Activated CD4-positive, alpha-beta T cell treated with anti-CD3 and anti-CD28 coated beads for 36 hours (primary cell): ENCODE measurements at regions of chr2 and their contacts with region 1.

Region 1: DNA sequence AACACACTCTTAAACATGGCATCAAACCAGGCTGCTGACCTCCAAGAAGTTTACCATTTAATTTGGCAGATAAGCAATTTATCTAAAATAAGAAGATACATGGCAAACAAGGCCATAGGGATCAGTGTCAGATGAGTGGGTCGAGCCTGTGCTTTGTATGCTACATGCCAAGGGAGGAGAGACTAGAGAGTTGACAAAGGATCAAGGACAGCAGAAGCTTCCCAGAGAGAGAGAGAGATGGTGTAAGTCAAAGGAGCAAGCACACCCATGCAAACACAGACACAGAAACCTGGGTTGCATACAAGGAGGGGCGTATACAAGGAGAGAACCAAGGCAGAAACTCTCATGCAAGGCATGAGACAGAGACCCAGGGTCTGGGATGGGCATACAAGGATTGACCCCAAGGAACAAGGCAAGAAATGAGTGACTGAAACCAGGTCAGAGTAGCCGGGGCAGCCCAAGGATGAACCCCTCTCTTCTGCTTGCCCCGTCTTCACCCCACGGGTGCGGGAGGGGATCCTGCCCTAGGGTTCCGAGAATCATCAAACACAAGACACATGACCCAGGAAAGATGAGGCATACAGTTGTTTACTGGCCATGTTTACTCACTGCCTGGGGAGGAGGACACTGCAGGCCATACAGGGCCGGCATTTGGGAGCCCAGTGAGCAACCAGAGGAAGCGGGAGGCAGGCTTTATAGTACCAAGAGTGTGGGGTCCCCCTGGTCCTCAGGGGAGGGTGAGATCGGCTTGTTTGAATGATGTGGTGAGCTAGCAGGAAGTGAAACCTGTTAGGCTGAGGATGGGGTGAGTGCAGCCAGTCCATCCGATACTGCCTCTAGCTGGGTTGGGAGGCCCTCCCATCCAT is 529.2 kb upstream of the ID2 start:
- DNase-seq: no peak
- ATAC-seq: no peak
- H3K4me3 Mint-ChIP-seq: no peak overlapping the region
- H3K27ac Mint-ChIP-seq: no peak overlapping the region
- H3K4me1 Mint-ChIP-seq: peaks cover 30% of the 10 kb centered on the region
- H3K27me3 Mint-ChIP-seq: no peaks in the 10 kb centered on the region

Region 2: DNA sequence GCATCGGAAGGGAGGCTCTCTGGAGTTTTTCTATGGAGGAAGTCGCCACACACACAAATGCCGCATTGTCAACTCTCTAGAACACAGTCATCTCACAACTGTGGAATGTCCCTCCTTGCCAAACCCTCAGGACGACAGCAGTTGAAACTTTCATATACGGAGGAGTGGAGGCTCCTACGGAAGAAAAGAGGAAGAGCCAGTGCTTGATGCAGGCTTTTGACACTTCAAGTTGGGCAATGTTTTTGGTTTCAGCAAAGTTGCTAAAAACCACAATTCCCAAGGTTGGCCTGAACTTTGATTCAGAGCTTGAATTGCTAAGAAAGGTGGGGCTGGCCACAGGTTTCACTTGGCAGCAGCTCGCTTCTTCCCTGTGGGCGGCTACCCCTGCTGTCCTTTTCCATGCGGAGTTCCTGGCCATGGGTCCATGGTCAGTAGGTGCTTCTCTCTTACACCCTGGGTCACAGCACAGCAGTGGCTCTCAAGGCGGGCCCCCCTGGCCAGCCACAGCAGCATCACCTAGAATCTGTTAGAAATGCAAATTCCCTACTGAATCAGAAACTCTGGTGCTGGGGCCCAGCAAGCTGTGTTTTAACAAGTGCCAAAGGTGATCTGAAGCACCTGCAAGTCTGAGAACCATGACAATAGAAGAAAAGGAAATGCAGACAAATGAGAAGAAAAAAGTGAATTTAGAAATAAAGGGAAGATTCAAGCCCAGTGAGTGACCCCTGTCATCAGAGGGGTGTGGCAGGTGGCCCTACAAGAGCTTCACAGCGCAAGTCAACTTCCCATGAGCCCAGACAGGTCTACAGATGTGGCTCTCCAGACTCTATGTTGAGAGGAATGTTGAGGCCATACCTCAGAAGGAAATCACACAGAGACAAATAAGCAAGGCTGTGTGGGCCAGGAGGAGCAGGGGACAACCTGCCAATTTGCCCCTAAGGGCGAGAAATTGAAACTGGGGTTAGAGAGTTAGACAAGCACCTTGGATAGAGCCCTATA is 379.0 kb before region 1 on chr2:
- CTCF ChIA-PET with region 1: no interaction called
- POLR2A ChIA-PET with region 1: no interaction called
- intact Hi-C with region 1: loop called in 1 of 2 experiments (anchors 10 kb)
- DNase-seq: peak; percentile 66
- ATAC-seq: peak; percentile 76
- H3K4me3 Mint-ChIP-seq: peak overlapping the region; percentile 11
- H3K27ac Mint-ChIP-seq: peak overlapping the region; percentile 64
- H3K4me1 Mint-ChIP-seq: peaks cover 28% of the 10 kb centered on the region
- H3K27me3 Mint-ChIP-seq: peaks cover 3% of the 10 kb centered on the region

Region 3: GRCh38 chr2:7930800-7931635 is 221.6 kb before region 1 on chr2:
- CTCF ChIA-PET with region 1: no interaction called
- POLR2A ChIA-PET with region 1: no interaction called
- intact Hi-C with region 1: loop called (anchors 2 to 5 kb)
- DNase-seq: peak; percentile 56
- ATAC-seq: peak; percentile 80
- H3K4me3 Mint-ChIP-seq: peak overlapping the region; percentile 0
- H3K27ac Mint-ChIP-seq: peak overlapping the region; percentile 93
- H3K4me1 Mint-ChIP-seq: peaks cover 33% of the 10 kb centered on the region
- H3K27me3 Mint-ChIP-seq: no peaks in the 10 kb centered on the region

Region 4: GRCh38 chr2:8119782-8120505 is 32.7 kb before region 1 on chr2:
- CTCF ChIA-PET with region 1: no interaction called
- POLR2A ChIA-PET with region 1: no interaction called
- intact Hi-C with region 1: loop called in 1 of 2 experiments (anchors 1 kb)
- DNase-seq: peak; percentile 26
- ATAC-seq: peak; percentile 82
- H3K4me3 Mint-ChIP-seq: peak overlapping the region; percentile 26
- H3K27ac Mint-ChIP-seq: peak overlapping the region; percentile 59
- H3K4me1 Mint-ChIP-seq: peaks cover 20% of the 10 kb centered on the region
- H3K27me3 Mint-ChIP-seq: no peaks in the 10 kb centered on the region

Region 5: GRCh38 chr2:8132351-8132831 is 20.2 kb before region 1 on chr2:
- CTCF ChIA-PET with region 1: no interaction called
- POLR2A ChIA-PET with region 1: no interaction called
- intact Hi-C with region 1: no loop called
- DNase-seq: no peak
- ATAC-seq: no peak
- H3K4me3 Mint-ChIP-seq: no peak overlapping the region
- H3K27ac Mint-ChIP-seq: no peak overlapping the region
- H3K4me1 Mint-ChIP-seq: no peaks in the 10 kb centered on the region
- H3K27me3 Mint-ChIP-seq: peaks cover 2% of the 10 kb centered on the region

Region 6: DNA sequence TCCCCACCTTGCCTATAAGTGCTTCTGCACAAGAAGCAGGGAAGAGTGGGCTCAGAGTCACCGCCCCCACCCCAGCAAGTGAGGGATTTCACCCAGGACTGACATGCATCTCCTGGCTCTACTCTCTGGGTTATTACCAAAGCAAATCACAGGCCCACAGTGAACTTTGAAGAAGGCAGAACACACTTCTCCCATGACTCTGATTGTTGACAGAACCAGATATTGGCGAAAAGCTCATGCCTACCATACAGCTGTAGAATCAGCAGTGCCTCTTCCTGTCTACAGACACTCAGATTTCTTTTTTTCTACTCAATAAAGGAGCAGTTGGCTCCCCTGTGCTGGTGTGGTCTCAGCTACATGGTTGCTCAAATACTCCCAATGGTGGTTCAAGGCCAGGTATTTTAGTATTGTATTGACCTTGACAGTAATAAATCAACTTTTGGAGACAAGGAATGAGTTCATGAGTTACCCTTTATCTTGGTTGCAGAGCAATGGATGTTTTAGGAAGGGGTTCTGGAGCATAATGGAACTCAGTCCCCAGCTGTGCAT is 16.3 kb after region 1 on chr2:
- CTCF ChIA-PET with region 1: no interaction called
- POLR2A ChIA-PET with region 1: interaction called, 3 read pairs
- intact Hi-C with region 1: loop called in 1 of 2 experiments (anchors 1 kb)
- DNase-seq: no peak
- ATAC-seq: no peak
- H3K4me3 Mint-ChIP-seq: no peak overlapping the region
- H3K27ac Mint-ChIP-seq: peak overlapping the region; percentile 60
- H3K4me1 Mint-ChIP-seq: peaks cover 13% of the 10 kb centered on the region
- H3K27me3 Mint-ChIP-seq: no peaks in the 10 kb centered on the region

Region 7: DNA sequence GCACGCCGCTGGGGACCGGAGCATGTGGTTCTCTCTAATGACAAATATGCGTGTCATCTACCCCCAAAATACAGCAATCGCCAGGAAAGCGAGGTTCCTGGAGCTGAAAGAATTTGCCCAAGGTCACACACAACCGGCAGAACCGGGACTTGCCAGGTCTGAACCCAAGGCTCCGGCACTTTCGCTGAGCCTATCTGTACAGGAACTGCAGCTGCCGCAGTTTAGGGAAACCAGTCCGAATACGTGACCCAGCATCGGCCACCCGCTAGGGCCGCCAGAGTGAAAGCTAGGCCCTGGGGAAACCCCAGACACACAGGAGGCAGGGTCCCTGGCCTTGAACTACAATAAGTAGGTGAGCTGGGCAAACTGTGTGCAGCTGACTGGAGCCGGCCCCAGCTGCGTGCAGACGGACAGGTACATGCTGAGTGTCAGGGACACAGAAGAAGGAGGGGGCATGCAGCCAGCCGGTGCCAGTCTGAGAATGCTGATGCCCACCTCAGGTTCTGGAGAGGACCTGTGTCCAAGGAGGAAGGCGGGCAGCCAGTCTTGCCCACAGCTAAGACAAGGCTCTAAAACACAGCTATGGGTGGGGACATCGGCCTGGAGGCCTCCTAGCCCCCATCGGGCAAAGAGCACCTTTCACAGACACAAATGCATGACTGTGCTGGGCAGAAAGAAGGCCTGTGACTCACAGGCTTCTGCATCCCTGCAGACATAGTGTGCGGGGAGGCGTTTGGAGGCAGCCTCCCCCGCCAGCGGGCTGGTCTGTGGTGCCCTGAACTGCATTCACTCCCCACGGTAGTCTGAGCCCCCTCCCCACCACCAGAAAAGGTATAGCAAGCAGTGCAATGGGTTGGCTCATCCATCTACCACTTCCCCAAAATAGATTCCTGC is 421.8 kb after region 1 on chr2:
- CTCF ChIA-PET with region 1: no interaction called
- POLR2A ChIA-PET with region 1: no interaction called
- intact Hi-C with region 1: no loop called
- DNase-seq: peak; percentile 23
- ATAC-seq: peak; percentile 30
- H3K4me3 Mint-ChIP-seq: peak overlapping the region; percentile 43
- H3K27ac Mint-ChIP-seq: no peak overlapping the region
- H3K4me1 Mint-ChIP-seq: peaks cover 40% of the 10 kb centered on the region
- H3K27me3 Mint-ChIP-seq: peaks cover 4% of the 10 kb centered on the region